ENCODE measurements at regions of chr1 and their contacts with region 1.

Region 1: GRCh38 chr1:161098210-161099068 is at the start of gene KLHDC9:
- DNase-seq: peak; percentile 68 to 83
- H3K4me3 ChIP-seq: peak within 1 kb of the TSS; percentile 63 to 76
- H3K27ac ChIP-seq: peak within 1 kb of the TSS; percentile 66 to 72
- H3K4me1 ChIP-seq: peaks cover 0 to 18% (median 15%) of the 10 kb centered on the region in 4 donors
- H3K27me3 ChIP-seq: no peaks in the 10 kb centered on the region
- CTCF ChIP-seq: no peak

Region 2: DNA sequence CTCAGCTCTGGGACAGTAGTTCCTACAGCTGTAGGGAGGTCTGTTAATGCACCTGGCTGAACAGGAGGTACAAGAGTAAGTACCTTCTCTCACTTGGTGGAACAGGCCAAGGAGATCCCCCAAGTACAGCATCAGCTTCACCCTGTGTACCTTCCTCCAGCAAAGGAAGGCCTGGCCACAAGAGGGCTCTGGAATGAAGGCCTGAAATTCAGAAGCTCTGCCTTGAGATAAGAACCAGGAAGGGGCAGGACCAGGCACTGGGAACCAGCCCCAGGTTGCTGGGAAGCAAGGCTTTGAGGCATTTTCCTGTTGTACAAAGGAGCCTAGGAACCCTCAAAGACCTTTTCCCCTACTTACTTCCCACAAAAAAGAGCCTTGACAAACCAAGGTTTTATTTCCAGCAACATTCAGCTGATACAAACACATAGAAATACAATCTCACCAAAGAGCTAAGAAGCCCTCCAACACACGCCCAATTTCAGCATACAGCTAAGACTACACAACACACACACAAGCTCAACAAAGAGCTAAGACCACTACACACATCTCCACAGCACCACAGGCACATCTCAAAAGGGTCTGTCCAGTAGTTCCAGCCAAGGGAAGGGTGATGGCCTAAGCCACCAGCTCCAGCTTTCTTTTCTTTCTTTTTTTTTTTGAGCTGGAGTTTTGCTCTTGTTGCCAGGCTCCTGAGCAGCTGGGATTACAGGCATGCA is 101.0 kb before region 1 on chr1:
- intact Hi-C with region 1: loop called (anchors 10 kb)
- DNase-seq: peak in 1 of 2 donors; percentile 61
- H3K4me3 ChIP-seq: no peak overlapping the region
- H3K27ac ChIP-seq: no peak overlapping the region
- H3K4me1 ChIP-seq: no peaks in the 10 kb centered on the region
- H3K27me3 ChIP-seq: no peaks in the 10 kb centered on the region
- CTCF ChIP-seq: peak; percentile 23 to 26

Measured in tibial artery (tissue), 4 donors.